Naive thymus-derived CD4-positive, alpha-beta T cell (primary cell): ENCODE measurements at regions of chr10 and their contacts with region 1.

Region 1: DNA sequence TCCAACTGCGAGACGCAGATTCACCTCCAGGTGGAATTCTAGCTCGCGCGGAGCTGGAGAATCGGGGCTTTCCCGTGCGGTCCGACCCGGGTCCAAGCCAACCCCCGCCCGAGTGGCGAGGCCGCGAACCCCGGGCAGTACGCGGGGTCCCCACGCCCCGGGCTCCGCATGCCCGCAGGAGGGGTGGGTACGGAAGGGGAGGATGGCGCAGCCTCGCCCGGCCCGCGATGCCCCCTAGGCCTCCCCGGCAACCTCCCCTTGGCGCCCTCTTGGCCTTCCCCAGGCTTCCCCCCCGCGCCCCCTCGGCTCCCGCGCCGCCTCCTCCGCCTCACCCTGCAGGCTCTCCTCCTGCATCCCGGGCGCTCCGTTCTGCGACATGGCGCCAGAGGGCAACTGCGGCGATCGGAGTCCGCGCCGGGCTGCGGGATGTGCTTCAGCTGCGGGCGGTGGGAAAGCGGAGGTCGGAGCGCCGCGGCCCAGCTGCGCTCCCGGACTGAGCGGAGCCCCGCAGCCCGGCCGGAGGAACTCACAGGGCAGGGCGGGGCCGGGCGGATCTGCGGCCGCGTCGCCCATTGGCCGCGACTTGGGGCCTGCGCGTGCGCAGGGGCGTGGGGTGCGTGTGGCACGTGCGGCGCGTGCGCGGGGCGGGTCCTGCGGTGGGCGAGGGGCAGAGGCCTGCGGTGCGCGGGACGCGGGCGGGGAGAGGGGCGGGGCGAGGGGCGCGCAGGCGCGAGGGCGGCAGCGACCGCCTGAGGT is at the start of gene BNIP3:
- DNase-seq: peak; percentile 92 to 99 (median 93)
- ATAC-seq: peak; percentile 96
- H3K4me3 ChIP-seq: peak within 1 kb of the TSS; percentile 79
- H3K4me3 Mint-ChIP-seq: peak within 1 kb of the TSS; percentile 81 to 93 (median 88)
- H3K27ac ChIP-seq: peak within 1 kb of the TSS; percentile 79
- H3K27ac Mint-ChIP-seq: peak within 1 kb of the TSS; percentile 66 to 89 (median 84)
- H3K4me1 ChIP-seq: peaks cover 7 to 22% of the 10 kb centered on the region in 2 donors
- H3K4me1 Mint-ChIP-seq: peaks cover 23 to 49% (median 42%) of the 10 kb centered on the region in 7 donors
- H3K27me3 ChIP-seq: no peaks in the 10 kb centered on the region
- H3K27me3 Mint-ChIP-seq: peaks cover 0 to 18% (median 0%) of the 10 kb centered on the region in 5 donors
- total RNA-seq, gene BNIP3: 17.7 to 81.7 (median 39.3) TPM

Region 2: DNA sequence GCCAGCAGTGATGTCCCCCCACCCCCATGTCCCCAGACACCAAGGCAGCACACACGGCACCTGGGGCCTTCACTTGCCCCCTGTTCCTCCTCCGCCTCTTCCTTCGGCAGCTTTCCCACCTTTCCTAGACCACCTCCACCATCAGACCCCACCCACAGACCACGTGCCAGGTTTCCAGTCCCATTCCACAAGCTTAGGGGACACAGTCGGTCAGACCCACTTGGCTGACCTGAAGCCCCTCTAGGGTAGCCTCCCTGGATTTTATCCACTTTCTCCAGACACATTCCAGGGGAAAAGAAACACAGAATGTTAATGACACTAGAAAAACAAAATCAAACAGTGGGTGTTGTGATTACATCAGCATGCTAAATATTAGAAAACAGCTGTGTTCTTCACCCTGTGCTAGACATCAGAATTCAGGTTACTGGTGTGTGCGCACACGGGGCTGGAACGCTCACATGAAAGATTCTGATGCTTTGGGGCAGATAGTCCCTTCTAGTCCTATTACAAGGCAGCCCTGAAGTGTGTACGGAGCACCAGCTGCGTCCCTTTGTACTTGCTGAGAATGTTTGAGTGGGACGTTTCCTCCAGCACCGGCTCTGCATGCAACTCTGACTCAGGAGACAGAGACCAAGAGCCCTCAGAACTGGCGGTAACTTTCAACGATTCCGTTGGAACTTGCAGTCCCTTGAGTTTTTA is 156.3 kb before region 1 on chr10:
- CTCF ChIA-PET with region 1: no interaction called
- POLR2A ChIA-PET with region 1: no interaction called
- intact Hi-C with region 1: no loop called
- DNase-seq: peak in 1 of 9 donors; percentile 5
- ATAC-seq: no peak
- H3K4me3 ChIP-seq: no peak overlapping the region
- H3K4me3 Mint-ChIP-seq: no peak overlapping the region
- H3K27ac ChIP-seq: no peak overlapping the region
- H3K27ac Mint-ChIP-seq: peak overlapping the region in 1 of 9 donors; percentile 74
- H3K4me1 ChIP-seq: no peaks in the 10 kb centered on the region
- H3K4me1 Mint-ChIP-seq: peaks cover 0 to 2% (median 0%) of the 10 kb centered on the region in 7 donors
- H3K27me3 ChIP-seq: no peaks in the 10 kb centered on the region
- H3K27me3 Mint-ChIP-seq: peaks cover 0 to 13% (median 9%) of the 10 kb centered on the region in 5 donors

Region 3: DNA sequence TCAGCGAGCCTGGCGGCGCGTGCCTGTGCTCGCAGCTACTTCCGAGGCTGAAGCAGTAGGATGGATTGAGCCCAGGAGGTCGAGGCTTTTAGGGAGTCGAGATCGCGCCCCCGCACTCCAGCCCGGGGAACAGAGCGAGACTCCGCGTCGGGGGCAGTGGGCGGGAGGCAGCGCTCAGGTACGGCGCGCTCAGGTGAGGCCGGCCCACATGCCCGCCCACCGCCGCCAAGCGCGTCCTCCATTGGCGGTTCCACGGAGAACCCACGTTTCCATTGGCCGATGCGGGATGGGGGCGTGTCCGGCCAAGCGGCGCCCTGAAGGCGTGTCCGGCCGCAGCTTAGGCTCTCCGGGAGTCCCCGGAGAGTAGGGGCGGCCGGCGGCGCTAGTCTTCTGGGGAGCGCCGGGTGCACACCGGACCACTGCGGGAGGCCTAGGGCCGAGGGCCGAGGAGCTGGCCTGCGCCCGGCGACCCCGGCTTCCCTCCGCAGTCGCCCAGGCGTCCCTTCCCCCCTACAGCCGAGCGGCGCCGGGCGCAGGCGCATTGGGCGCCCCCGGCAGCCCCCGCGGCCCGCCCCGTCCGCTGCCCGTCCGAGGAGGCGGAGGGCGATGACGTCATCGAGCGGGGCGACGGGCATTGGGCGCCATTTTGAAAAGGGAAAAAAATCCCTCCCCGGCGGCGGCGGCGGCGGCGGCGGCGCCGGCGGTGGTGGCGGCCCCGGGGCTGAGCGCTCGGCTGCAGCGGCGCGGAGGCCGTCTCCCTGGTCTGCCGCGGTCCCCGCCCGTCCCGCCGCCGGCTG is 81.1 kb before region 1 on chr10 and contains the start of gene PPP2R2D:
- CTCF ChIA-PET with region 1: no interaction called
- POLR2A ChIA-PET with region 1: interaction called, 12 read pairs
- intact Hi-C with region 1: loop called (anchors 1 kb)
- DNase-seq: peak; percentile 95 to 99 (median 97)
- ATAC-seq: peak; percentile 90
- H3K4me3 ChIP-seq: peak within 1 kb of the TSS; percentile 64
- H3K4me3 Mint-ChIP-seq: peak within 1 kb of the TSS; percentile 90 to 95 (median 92)
- H3K27ac ChIP-seq: peak within 1 kb of the TSS; percentile 94
- H3K27ac Mint-ChIP-seq: peak within 1 kb of the TSS; percentile 86 to 97 (median 93)
- H3K4me1 ChIP-seq: peaks cover 34 to 40% of the 10 kb centered on the region in 2 donors
- H3K4me1 Mint-ChIP-seq: peaks cover 30 to 67% (median 61%) of the 10 kb centered on the region in 7 donors
- H3K27me3 ChIP-seq: no peaks in the 10 kb centered on the region
- H3K27me3 Mint-ChIP-seq: peaks cover 0 to 18% (median 0%) of the 10 kb centered on the region in 5 donors
- total RNA-seq, gene PPP2R2D: 37.1 to 61.3 (median 40.1) TPM

Region 4: GRCh38 chr10:131964296-131964695 is 17.3 kb before region 1 on chr10:
- CTCF ChIA-PET with region 1: no interaction called
- POLR2A ChIA-PET with region 1: interaction called, 10 read pairs
- intact Hi-C with region 1: loop called in 1 of 2 experiments (anchors 2 kb)
- DNase-seq: no peak
- ATAC-seq: no peak
- H3K4me3 ChIP-seq: no peak overlapping the region
- H3K4me3 Mint-ChIP-seq: peak overlapping the region in 1 of 10 donors; percentile 71
- H3K27ac ChIP-seq: no peak overlapping the region
- H3K27ac Mint-ChIP-seq: peak overlapping the region in 7 of 9 donors; percentile 6 to 84 (median 76)
- H3K4me1 ChIP-seq: peaks cover 3 to 16% of the 10 kb centered on the region in 2 donors
- H3K4me1 Mint-ChIP-seq: peaks cover 20 to 45% (median 35%) of the 10 kb centered on the region in 7 donors
- H3K27me3 ChIP-seq: no peaks in the 10 kb centered on the region
- H3K27me3 Mint-ChIP-seq: no peaks in the 10 kb centered on the region

Region 5: GRCh38 chr10:132023092-132023811 is 41.6 kb after region 1 on chr10:
- CTCF ChIA-PET with region 1: interaction called, 4 read pairs
- POLR2A ChIA-PET with region 1: interaction called, 3 read pairs
- intact Hi-C with region 1: loop called in 1 of 2 experiments (anchors 2 kb)
- DNase-seq: peak; percentile 47 to 79 (median 70)
- ATAC-seq: peak; percentile 86
- H3K4me3 ChIP-seq: no peak overlapping the region
- H3K4me3 Mint-ChIP-seq: peak overlapping the region; percentile 14 to 75 (median 66)
- H3K27ac ChIP-seq: no peak overlapping the region
- H3K27ac Mint-ChIP-seq: peak overlapping the region in 3 of 9 donors; percentile 3 to 52 (median 8)
- H3K4me1 ChIP-seq: peaks cover 0 to 6% of the 10 kb centered on the region in 2 donors
- H3K4me1 Mint-ChIP-seq: peaks cover 5 to 16% (median 7%) of the 10 kb centered on the region in 7 donors
- H3K27me3 ChIP-seq: no peaks in the 10 kb centered on the region
- H3K27me3 Mint-ChIP-seq: peaks cover 31 to 49% (median 36%) of the 10 kb centered on the region in 5 donors